GM18951 (cell line): ENCODE measurements at regions of chr9 and their contacts with region 1.

Region 1: DNA sequence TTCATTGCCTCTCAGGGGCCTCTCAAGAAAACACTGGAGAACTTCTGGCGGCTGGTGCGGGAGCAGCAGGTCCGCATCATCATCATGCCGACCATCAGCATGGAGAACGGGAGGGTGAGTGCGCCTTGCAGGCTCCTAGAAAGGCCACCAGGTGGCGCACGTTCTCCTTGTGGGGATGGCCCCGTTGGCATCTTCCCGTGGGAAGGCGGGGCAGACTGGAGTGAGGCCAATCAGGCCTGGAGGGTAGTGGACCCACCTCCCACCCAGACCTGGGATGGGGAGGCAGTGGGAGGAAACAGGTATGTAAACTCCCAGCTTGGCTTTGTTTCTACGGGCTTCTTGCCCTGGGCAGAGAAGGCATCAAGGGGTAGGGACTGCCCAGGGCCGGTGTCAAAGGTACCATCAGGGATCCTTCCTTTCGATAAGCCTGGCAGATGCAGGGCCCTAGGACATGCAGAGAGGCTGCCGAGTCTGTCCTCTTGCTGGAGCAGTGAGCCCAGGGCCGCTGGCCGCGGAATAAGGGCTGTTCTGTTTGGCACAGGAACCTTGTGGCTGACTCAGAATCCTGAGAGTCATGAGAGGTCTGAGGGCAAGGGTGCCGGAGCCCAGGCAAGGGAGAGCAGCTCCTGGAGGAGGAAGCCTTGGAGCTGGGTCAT is 18.9 kb upstream of the SPTLC1 start:
- POLR2A ChIP-seq: no peak

Region 2: DNA sequence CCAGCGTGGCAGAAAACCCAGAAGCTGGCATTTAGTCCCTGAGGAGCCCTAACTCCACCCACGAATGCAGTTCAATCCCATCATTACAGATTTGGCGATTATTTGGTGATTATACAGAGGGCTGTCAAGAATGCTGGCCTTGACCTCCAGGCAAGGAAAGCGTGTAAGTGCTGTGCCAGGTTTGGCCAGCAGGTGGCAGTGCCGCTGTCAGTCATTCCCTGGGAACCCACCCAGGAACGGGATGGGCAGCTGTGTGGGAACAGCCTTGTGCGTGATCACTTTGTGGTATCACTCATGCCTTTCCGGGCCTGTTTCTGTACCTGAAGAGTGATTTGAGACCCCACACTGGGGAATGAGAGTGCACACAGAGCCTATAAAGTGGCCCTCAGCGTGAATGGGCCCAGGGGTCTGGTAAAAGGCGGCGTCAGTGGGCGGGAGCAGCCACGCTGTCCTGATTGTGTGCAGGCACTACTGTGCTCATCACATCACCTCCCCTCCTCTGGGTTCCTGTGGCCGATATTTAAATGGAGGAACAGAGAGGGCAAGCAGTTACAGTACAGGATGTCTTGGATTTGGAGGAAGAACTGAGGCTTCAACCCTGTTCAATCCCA is 399.6 kb before region 1 on chr9:
- in situ Hi-C with region 1: no loop called
- POLR2A ChIP-seq: no peak

Region 3: DNA sequence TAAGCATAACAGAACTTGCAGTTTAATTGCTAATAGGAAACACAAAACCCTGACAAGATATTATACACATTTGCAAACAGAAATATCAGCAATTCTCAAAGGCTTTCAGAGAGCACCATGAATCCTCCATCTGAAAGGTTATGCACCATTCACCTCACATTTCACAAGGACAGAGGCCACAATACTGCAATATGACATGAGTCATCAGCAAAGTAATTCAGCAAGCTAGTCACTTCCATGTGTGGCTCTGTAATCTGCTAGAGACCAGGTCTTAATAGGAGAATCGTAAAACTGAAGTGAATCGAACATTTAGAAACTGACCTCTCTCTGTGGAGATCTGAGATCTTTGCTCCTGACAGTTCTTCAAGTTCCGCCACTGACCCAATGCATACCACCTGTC is 131.1 kb after region 1 on chr9:
- in situ Hi-C with region 1: loop called (anchors 25 kb)
- POLR2A ChIP-seq: no peak

Region 4: GRCh38 chr9:92634712-92635605 is 500.9 kb after region 1 on chr9:
- in situ Hi-C with region 1: loop called (anchors 10 kb)
- POLR2A ChIP-seq: no peak

Region 5: GRCh38 chr9:92790542-92791527 is 656.8 kb after region 1 on chr9:
- in situ Hi-C with region 1: loop called (anchors 25 kb)
- POLR2A ChIP-seq: no peak